Ovary (tissue), 10 donors: ENCODE measurements at regions of chr1 and their contacts with region 1.

Region 1: GRCh38 chr1:182084487-182085316 is 23.2 kb upstream of the ZNF648 start:
- DNase-seq: peak; percentile 83 to 93 (median 91)
- H3K4me3 ChIP-seq: no peak overlapping the region
- H3K27ac ChIP-seq: peak overlapping the region in 1 of 2 donors; percentile 64
- H3K4me1 ChIP-seq: peaks cover 2% of the 10 kb centered on the region
- H3K27me3 ChIP-seq: no peaks in the 10 kb centered on the region
- CTCF ChIP-seq: peak; percentile 78 to 95 (median 87)
- EP300 ChIP-seq: no peak
- POLR2A ChIP-seq: peak; percentile 4

Region 2: DNA sequence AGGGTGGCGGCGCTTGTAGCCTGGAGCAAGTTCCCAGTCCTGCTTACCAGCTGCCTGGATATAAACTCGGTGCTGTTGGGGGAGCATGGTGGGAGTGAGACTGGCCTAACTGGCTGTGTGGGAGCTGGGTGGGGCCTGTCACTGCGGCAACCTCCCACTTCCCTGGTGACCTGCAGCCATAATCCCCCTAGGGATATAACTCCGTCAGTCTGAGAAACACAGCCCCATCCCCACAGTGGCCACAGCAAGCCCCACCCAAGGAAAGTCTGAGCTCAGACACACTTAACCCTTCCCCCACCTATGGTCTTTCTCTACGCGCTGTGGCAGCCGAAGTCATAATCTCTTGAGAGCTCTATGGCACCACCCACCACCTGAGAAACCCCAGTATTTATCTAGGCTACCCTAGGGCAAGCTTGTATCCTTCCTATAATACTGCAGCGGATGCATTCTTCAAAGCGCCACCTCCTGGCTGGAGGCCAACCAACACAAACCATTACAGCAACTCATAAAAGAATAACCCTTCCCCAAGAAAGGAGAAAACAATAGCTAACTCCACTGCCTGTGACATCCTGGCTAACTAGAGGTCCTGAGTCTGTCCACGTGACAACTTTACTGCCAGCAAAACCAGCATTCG is 80.6 kb before region 1 on chr1:
- intact Hi-C with region 1: no loop called
- DNase-seq: no peak
- H3K4me3 ChIP-seq: no peak overlapping the region
- H3K27ac ChIP-seq: no peak overlapping the region
- H3K4me1 ChIP-seq: no peaks in the 10 kb centered on the region
- H3K27me3 ChIP-seq: no peaks in the 10 kb centered on the region
- CTCF ChIP-seq: no peak
- EP300 ChIP-seq: no peak
- POLR2A ChIP-seq: no peak

Region 3: GRCh38 chr1:182133176-182133575 is 48.5 kb after region 1 on chr1:
- intact Hi-C with region 1: loop called in 1 of 4 experiments (anchors 5 kb)
- DNase-seq: no peak
- H3K4me3 ChIP-seq: no peak overlapping the region
- H3K27ac ChIP-seq: no peak overlapping the region
- H3K4me1 ChIP-seq: peaks cover 2% of the 10 kb centered on the region
- H3K27me3 ChIP-seq: no peaks in the 10 kb centered on the region
- CTCF ChIP-seq: no peak
- EP300 ChIP-seq: no peak
- POLR2A ChIP-seq: no peak

Region 4: GRCh38 chr1:182281541-182281940 is 196.8 kb after region 1 on chr1:
- intact Hi-C with region 1: no loop called
- DNase-seq: no peak
- H3K4me3 ChIP-seq: no peak overlapping the region
- H3K27ac ChIP-seq: no peak overlapping the region
- H3K4me1 ChIP-seq: no peaks in the 10 kb centered on the region
- H3K27me3 ChIP-seq: no peaks in the 10 kb centered on the region
- CTCF ChIP-seq: no peak
- EP300 ChIP-seq: no peak
- POLR2A ChIP-seq: no peak

Region 5: DNA sequence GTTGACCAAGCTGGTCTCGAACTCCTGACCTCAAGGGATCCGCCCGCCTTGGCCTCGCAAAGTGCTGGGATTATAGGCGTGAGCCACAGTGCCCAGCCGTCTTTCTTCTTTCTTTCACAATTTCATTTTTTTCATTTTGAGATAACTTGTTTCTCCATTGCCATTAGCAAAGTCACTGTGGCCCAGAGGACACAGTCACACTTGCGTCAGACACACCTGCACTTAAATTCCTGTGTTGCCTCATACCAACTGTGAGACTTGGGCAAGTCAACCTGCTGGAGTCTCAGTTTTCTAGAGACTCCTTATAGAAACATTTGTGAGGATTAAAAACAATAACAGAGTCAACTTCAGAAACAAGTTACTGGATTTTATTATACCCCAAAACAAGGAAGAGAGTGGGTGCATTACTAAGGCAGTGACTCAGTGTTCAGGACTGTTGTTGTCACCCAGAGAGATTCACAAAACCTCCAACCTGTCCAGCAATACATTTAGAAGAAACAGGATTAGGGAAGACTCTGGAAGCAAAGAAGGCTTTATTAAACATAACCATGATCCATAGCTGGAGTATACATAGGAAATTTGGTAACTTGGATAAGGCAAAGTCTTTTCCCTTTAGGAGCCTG is 313.2 kb after region 1 on chr1:
- intact Hi-C with region 1: loop called (anchors 1 to 10 kb)
- DNase-seq: no peak
- H3K4me3 ChIP-seq: no peak overlapping the region
- H3K27ac ChIP-seq: peak overlapping the region in 1 of 2 donors; percentile 70
- H3K4me1 ChIP-seq: peaks cover 4% of the 10 kb centered on the region
- H3K27me3 ChIP-seq: no peaks in the 10 kb centered on the region
- CTCF ChIP-seq: no peak
- EP300 ChIP-seq: no peak
- POLR2A ChIP-seq: no peak

Region 6: DNA sequence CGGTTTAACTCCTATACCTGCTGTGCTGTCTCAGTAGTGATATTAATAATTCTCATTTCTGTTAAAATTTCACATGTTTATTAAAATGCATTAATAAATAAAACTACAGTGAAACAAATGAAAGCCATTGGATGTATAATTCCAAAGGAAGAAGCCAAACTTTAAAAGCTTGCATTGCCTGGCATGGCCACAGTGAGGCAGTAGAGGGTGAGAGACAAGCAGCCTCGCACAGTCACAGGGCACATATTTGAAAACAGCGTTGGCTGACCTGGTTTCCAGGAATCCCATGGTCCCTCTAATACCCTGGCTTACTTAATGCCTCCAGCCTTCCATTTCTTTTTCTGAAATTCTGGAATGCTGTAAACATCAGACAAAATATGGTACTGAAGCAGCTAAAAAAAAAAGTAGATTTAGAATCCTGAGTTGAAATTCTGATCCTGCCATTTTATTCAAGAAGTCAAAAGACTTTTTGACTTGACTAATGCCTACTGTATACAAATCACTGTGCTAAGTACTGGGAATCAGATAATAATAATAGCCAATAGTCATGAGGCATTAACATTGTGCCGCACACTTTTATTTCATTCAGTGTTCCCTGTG is 511.0 kb after region 1 on chr1:
- intact Hi-C with region 1: loop called in 2 of 4 experiments (anchors 5 kb)
- DNase-seq: peak; percentile 32 to 79 (median 66)
- H3K4me3 ChIP-seq: no peak overlapping the region
- H3K27ac ChIP-seq: no peak overlapping the region
- H3K4me1 ChIP-seq: no peaks in the 10 kb centered on the region
- H3K27me3 ChIP-seq: no peaks in the 10 kb centered on the region
- CTCF ChIP-seq: peak; percentile 43 to 77 (median 52)
- EP300 ChIP-seq: no peak
- POLR2A ChIP-seq: no peak